CD14-positive monocyte (primary cell): ENCODE measurements at regions of chr14 and their contacts with region 1.

Region 1: GRCh38 chr14:22598099-22598899 is at the start of gene ABHD4:
- DNase-seq: peak; percentile 42 to 54 (median 49)
- H3K4me3 ChIP-seq: peak within 1 kb of the TSS; percentile 90 to 95 (median 94)
- H3K4me3 Mint-ChIP-seq: peak within 1 kb of the TSS; percentile 98
- H3K27ac ChIP-seq: peak within 1 kb of the TSS; percentile 11 to 81
- H3K27ac Mint-ChIP-seq: peak within 1 kb of the TSS; percentile 86 to 97 (median 92)
- H3K4me1 ChIP-seq: peaks cover 14 to 21% of the 10 kb centered on the region in 2 donors
- H3K4me1 Mint-ChIP-seq: peaks cover 24% of the 10 kb centered on the region
- H3K27me3 ChIP-seq: peaks cover 2 to 6% of the 10 kb centered on the region in 2 donors
- H3K27me3 Mint-ChIP-seq: peaks cover 6 to 30% (median 23%) of the 10 kb centered on the region in 3 donors
- CTCF ChIP-seq: peak; percentile 22
- polyA plus RNA-seq, gene ABHD4: 9.4 to 13.4 (median 12.5) TPM

Region 2: DNA sequence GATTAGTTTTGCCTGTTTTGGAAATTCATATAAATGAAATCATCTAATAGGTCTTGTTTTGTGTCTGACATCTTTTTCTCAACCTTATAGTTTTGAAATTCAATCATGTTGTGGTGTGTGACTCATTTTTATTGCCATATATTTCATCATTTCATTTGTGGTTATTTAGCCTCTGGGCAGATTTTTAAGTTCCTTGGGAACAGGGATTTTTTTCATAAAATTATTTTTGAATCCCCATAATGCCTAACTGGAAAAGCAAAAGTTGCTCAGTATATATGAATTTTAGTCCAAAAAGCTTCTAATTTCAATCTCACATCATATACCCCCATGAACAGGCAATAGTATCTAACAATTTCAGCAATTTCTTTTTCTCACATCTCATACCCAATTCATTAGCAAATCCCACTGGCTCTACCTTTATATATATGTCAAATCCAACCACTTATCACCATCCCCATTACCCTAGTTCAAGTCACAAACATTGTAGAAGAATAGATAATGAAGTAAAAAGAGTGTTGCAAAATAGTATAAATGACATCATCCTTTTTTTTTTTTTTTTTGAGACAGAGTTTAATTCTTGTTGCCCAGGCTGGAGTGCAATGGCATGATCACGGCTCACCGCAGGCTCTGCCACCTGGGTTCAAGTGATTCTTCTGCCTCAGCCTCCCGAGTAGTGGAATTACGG is 48.4 kb after region 1 on chr14:
- intact Hi-C with region 1: loop called in 1 of 2 experiments (anchors 5 kb)
- DNase-seq: peak; percentile 27 to 65 (median 64)
- H3K4me3 ChIP-seq: peak overlapping the region in 1 of 3 experiments; percentile 40
- H3K4me3 Mint-ChIP-seq: peak overlapping the region in 1 of 2 donors; percentile 62
- H3K27ac ChIP-seq: peak overlapping the region in 1 of 2 donors; percentile 22
- H3K27ac Mint-ChIP-seq: peak overlapping the region; percentile 1 to 91 (median 84)
- H3K4me1 ChIP-seq: peaks cover 14% of the 10 kb centered on the region in 2 donors
- H3K4me1 Mint-ChIP-seq: peaks cover 16% of the 10 kb centered on the region
- H3K27me3 ChIP-seq: peaks cover 5 to 11% of the 10 kb centered on the region in 2 donors
- H3K27me3 Mint-ChIP-seq: peaks cover 19 to 33% (median 21%) of the 10 kb centered on the region in 3 donors
- CTCF ChIP-seq: no peak

Region 3: GRCh38 chr14:22766456-22767322 is 168.4 kb after region 1 on chr14 and contains the start of gene OXA1L:
- intact Hi-C with region 1: loop called in 1 of 2 experiments (anchors 5 kb)
- DNase-seq: peak; percentile 96 to 97 (median 97)
- H3K4me3 ChIP-seq: peak within 1 kb of the TSS; percentile 77 to 97 (median 90)
- H3K4me3 Mint-ChIP-seq: peak within 1 kb of the TSS; percentile 88 to 94
- H3K27ac ChIP-seq: peak within 1 kb of the TSS; percentile 88 to 94
- H3K27ac Mint-ChIP-seq: peak within 1 kb of the TSS; percentile 89 to 98 (median 97)
- H3K4me1 ChIP-seq: peaks cover 20 to 25% of the 10 kb centered on the region in 2 donors
- H3K4me1 Mint-ChIP-seq: peaks cover 28% of the 10 kb centered on the region
- H3K27me3 ChIP-seq: no peaks in the 10 kb centered on the region
- H3K27me3 Mint-ChIP-seq: peaks cover 0 to 2% (median 0%) of the 10 kb centered on the region in 3 donors
- CTCF ChIP-seq: no peak
- polyA plus RNA-seq, gene OXA1L: 61.2 to 264 (median 86.9) TPM